ENCODE measurements at regions of chr11 and their contacts with region 1.

Region 1: GRCh38 chr11:79062814-79063762 is 377.7 kb downstream of the TENM4 start:
- DNase-seq: no peak
- H3K4me3 ChIP-seq: no peak overlapping the region
- CTCF ChIP-seq: peak; percentile 60

Region 2: DNA sequence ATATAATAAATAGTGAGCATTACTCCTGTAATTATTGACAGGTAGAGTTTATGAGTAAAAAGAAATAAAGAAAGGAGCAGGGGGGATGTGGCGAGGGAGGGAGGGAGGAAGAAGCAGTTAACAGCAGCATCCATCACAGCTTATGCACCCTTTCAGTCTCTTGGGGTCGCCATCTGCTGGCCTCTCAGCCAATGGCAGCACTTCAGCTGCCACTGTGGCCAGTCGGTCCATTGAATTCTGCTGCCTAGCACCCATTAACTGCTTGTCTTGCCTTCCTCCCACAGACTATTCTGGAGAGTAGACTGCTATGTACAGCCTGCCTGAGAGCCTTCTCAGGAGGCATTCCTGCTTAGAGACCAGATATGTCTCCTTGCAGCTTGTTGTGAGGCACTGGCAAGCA is 10.5 kb before region 1 on chr11:
- CTCF ChIA-PET with region 1: interaction called, 16 read pairs
- POLR2A ChIA-PET with region 1: no interaction called
- DNase-seq: no peak
- H3K4me3 ChIP-seq: no peak overlapping the region
- CTCF ChIP-seq: peak; percentile 38

Region 3: DNA sequence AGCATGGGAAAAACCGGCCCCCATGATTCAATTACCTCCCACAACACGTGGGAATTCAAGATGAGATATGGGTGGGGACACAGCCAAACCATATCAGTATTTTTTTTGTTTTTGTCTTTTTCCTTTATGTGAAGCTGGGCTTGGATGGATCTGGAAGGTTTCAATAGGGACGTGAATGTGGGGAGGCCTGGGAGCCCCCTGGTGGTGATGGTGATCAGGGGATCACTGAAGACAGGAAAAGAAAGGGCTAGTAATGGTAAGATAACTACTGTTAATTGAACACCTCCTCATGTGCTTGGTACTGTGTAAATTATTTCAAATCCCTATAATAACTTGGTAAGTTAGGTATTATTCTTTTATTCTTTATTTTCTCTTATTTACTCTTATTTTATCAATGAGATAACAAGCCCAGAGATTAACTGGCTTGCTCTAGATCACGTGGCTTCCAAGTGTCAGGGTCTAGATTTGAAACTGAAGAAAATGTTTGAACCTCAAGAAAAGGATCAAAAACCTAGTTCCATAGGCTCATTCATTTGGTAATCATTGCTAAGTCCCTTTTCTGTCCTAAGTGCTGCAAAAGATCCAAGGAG is 13.5 kb after region 1 on chr11:
- CTCF ChIA-PET with region 1: interaction called, 32 read pairs
- POLR2A ChIA-PET with region 1: interaction called, 4 read pairs
- DNase-seq: no peak
- H3K4me3 ChIP-seq: no peak overlapping the region
- CTCF ChIP-seq: peak; percentile 52

Region 4: DNA sequence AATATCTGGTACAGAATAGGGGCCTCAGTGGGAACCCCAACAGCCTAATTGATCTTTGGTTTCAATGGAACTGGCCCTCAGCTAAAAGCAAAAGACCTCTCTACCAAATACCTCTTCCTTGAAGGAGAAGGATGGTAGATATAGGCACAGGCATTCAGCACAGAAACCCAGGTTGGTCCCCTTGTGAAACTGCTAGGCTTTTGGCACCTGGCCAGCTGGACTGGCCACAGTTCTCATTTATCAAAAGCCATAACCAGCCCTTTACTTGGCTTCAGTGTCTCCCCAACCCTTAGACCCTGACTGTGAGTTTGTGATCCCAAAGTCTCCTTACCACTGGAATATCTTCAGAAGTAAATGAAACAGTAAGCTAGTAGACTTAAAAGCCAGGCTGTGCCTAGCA is 224.9 kb after region 1 on chr11:
- CTCF ChIA-PET with region 1: no interaction called
- POLR2A ChIA-PET with region 1: no interaction called
- DNase-seq: no peak
- H3K4me3 ChIP-seq: no peak overlapping the region
- CTCF ChIP-seq: no peak